Naive thymus-derived CD8-positive, alpha-beta T cell (primary cell): ENCODE measurements at regions of chr11 and their contacts with region 1.

Region 1: GRCh38 chr11:66317723-66318599 is 1.1 kb upstream of the CD248 start:
- DNase-seq: peak; percentile 75 to 98 (median 93)
- ATAC-seq: peak; percentile 72 to 85
- H3K4me3 Mint-ChIP-seq: peak overlapping the region; percentile 73 to 97 (median 90)
- H3K27ac Mint-ChIP-seq: peak overlapping the region; percentile 84 to 100 (median 100)
- H3K4me1 Mint-ChIP-seq: peaks cover 36 to 76% (median 60%) of the 10 kb centered on the region in 4 donors
- H3K27me3 Mint-ChIP-seq: no peaks in the 10 kb centered on the region

Region 2: DNA sequence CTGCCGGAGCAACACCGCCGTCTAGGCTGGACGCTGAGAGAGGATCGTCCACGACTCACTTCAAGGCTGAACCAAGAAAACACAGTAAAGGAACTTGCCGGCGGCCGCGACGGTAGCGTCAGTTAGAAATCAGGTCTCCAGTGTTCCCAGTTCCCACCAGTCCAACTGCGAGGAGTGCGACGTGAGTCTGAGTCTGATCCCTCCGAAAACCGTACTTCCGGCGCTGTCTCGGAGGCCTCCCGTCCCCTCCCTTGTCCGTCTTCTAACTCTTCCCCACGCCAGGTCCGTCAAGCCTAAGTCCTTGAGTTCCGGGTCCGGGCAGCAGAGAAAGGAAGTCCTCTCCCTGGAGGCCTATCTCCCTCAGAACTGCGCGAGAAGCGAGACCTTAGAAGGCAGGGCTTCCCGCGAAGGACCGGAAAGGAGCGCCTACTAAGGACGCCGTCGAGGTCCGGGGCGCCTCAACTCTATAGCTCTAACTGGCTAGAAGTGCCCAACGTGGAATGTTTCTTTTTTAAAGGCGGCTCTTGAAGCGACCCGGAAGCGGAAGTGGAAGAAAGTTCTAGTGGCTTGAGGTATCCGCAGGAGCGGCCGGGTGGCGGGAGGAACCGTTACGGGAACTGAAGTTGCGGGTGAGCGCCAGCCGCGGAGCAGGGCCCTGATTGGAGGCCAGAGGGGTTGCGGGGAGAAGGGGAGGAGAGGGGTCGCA is 315.9 kb before region 1 on chr11 and contains the starts of genes BANF1 and EIF1AD:
- POLR2A ChIA-PET with region 1: no interaction called
- DNase-seq: peak; percentile 69 to 99 (median 94)
- ATAC-seq: peak; percentile 79 to 88
- H3K4me3 Mint-ChIP-seq: peak within 1 kb of the TSS; percentile 98 to 100 (median 99)
- H3K27ac Mint-ChIP-seq: peak within 1 kb of the TSS; percentile 98 to 100 (median 99)
- H3K4me1 Mint-ChIP-seq: peaks cover 17 to 54% (median 48%) of the 10 kb centered on the region in 4 donors
- H3K27me3 Mint-ChIP-seq: no peaks in the 10 kb centered on the region
- polyA plus RNA-seq, gene BANF1: 225 to 250 (median 241) TPM
- polyA plus RNA-seq, gene EIF1AD: 11.5 to 18.7 (median 14.3) TPM

Region 3: GRCh38 chr11:66087148-66087908 is 230.6 kb before region 1 on chr11:
- POLR2A ChIA-PET with region 1: no interaction called
- DNase-seq: no peak
- ATAC-seq: no peak
- H3K4me3 Mint-ChIP-seq: peak overlapping the region in 9 of 10 donors; percentile 26 to 69 (median 47)
- H3K27ac Mint-ChIP-seq: peak overlapping the region; percentile 11 to 95 (median 76)
- H3K4me1 Mint-ChIP-seq: peaks cover 31 to 83% (median 77%) of the 10 kb centered on the region in 4 donors
- H3K27me3 Mint-ChIP-seq: no peaks in the 10 kb centered on the region

Region 4: DNA sequence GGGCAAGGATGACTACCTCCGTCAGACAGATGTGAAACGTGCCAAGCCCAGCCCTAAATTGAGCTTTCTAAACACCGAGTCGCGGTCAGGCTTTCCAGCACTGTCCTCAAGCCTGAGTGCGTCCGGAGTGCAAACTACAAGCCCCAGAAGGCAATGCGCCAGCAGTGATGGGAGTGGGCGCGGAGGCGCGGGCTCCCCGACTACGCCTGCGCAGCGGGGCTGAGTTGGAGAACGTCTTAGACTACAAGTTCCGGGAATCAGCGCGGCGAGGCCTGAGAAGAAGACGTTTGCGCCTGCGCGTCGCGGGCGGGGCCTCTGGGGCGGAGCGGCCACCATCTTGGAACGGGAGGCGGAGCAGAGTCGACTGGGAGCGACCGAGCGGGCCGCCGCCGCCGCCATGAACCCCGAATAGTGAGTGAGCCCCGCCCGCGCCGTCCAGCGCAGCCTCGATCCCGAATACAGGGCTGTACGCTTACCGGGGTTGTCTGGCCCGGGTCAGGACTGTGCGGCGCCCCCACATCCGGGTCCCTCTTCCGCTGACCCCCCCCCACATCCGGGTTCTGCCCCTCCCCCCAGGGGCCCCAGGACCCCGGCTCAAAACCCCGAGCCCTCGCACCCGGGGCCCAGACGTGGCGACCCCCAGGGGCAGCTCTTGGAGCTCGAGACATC is 49.5 kb before region 1 on chr11 and contains the start of gene RAB1B:
- POLR2A ChIA-PET with region 1: interaction called, 19 read pairs
- DNase-seq: peak; percentile 98 to 100 (median 100)
- ATAC-seq: peak; percentile 76 to 80
- H3K4me3 Mint-ChIP-seq: peak within 1 kb of the TSS; percentile 89 to 98 (median 94)
- H3K27ac Mint-ChIP-seq: peak within 1 kb of the TSS; percentile 95 to 100 (median 99)
- H3K4me1 Mint-ChIP-seq: peaks cover 23 to 50% (median 45%) of the 10 kb centered on the region in 4 donors
- H3K27me3 Mint-ChIP-seq: peaks cover 0 to 2% (median 0%) of the 10 kb centered on the region in 5 donors
- polyA plus RNA-seq, gene RAB1B: 13.1 to 16.1 (median 14.0) TPM

Region 5: DNA sequence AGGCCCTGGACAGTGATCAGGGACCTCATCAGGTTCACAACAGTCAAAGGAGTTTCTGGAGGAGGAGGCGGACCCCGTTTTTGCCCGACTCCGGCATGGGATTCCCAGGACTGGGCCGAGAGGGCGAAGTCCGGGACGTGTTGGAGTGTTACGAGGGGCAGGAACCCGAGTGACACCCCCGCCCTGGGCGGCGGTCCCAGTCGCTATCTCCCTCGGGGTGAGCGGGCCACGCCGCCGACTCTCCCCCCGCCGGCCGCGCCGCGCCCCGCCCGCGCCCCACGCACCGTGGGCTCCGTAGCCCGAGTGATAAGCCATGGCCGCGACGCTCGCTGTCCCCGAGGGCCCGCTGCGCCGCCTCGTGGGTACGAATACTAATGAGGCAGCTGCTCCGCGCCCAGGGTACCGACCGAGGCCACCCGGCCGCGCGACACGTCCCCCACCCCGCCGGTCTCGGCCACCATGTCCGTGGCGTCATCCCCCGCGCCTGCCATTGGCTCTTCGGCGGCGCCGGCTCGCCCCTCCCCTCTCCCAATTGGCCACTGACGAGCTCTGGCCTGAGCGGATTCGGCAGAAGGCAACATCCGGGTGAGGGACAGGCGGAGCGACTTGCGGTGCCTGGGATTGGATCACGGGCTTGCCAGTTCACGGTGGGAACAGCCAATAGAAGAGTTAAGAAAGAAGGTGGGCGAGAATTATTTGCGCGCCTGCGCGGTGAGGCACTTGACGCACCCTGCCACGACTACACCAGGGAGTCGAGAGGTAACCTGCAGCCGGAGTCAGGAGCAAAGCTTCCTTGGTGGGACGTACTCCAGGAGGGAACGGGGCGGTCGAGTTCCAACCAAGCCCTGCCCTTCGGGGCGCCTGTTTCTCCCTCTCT is 29.1 kb before region 1 on chr11 and contains the start of gene YIF1A:
- POLR2A ChIA-PET with region 1: interaction called, 16 read pairs
- DNase-seq: peak; percentile 94 to 99 (median 98)
- ATAC-seq: peak; percentile 90 to 94
- H3K4me3 Mint-ChIP-seq: peak within 1 kb of the TSS; percentile 84 to 96 (median 92)
- H3K27ac Mint-ChIP-seq: peak within 1 kb of the TSS; percentile 88 to 97 (median 94)
- H3K4me1 Mint-ChIP-seq: peaks cover 19 to 51% (median 45%) of the 10 kb centered on the region in 4 donors
- H3K27me3 Mint-ChIP-seq: peaks cover 2 to 20% (median 13%) of the 10 kb centered on the region in 5 donors
- polyA plus RNA-seq, gene YIF1A: 49.1 to 59.9 (median 53.9) TPM

Region 6: DNA sequence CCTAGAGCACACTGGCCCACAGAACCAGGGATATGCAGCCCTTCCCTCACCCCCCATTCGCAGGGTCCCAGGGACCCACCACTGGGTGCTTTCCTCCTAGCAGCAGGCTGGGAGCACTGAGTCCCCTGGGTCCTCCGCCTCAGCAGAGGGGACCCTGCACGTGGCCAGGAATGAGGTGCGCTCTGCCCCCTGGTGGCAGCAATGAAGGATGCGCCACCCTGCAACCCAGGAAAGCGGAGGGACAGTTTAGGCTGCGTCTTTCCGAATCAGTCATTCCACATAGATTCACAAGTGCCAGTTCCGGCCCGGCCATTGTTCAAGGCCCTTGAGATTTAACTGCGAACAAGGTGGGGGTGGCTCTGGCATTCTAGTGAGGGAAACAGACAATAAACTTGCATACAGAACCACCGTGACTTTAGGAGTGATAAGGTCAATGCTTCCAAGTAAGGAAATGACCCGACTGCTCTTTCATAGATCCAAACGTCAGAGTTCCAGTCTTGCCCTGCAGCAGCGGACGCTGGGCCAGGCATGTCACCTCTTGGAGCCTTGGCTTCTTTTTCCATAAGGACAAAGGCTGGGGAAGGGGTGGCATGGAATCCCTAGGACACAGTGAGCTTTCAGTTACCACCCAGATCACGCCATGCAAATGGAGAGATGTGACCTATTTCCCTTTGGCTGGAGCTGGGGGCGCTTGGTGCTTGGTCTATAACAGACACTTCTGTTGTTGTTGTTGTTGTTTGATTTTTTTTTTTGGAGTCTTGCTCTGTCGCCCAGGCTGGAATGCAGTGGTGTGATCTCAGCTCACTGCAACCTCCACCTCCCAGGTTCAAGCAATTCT is 10.6 kb after region 1 on chr11:
- POLR2A ChIA-PET with region 1: interaction called, 126 read pairs
- DNase-seq: peak; percentile 70 to 90 (median 80)
- ATAC-seq: peak; percentile 88 to 89
- H3K4me3 Mint-ChIP-seq: peak overlapping the region; percentile 20 to 88 (median 70)
- H3K27ac Mint-ChIP-seq: peak overlapping the region; percentile 85 to 95 (median 91)
- H3K4me1 Mint-ChIP-seq: peaks cover 25 to 48% (median 44%) of the 10 kb centered on the region in 4 donors
- H3K27me3 Mint-ChIP-seq: no peaks in the 10 kb centered on the region

Region 7: DNA sequence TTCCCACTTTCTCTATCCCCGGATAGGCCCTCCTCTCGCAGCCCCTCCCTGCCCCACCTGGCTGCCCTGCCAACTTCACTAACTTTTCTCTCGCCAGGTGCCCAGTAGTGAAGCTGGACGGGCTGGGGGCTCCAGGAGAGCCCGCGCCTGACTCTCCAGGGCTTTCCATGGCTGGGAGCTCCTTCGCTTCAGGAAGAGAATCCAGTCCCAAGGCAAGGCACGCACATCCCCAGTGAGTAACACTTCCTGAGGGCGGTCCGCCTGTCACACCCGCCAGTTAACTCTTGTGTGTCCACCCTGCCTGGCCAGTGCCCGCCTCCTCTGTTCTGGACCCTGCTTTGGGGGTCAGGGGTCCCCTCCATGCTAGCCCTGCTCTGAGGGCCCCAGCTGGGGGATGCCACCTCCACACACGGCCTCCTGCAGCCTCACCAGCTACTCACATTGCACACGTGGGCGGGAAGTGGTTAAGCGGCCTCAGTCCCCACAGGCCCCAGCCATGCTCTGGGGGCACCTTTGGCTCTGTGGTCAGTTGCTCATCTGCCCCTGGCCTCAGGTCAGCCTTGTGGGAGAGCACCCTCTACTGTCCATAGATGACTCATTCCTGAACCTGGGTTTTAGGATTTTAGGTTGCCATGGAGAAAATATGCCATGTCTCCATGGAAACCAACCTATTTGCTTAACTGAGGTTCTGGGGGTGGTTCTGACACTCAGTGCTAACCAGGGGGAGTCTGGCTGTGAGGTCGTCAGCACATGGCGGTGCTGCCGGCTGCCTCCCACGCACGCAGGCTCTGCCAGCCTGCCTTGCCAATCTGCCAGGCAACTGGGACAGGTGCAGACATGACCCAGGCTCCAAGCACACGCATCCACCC is 18.5 kb after region 1 on chr11 and contains the start of gene RIN1:
- POLR2A ChIA-PET with region 1: interaction called, 45 read pairs
- DNase-seq: peak in 9 of 10 donors; percentile 12 to 80 (median 62)
- ATAC-seq: peak; percentile 81 to 86
- H3K4me3 Mint-ChIP-seq: peak within 1 kb of the TSS; percentile 89 to 96 (median 92)
- H3K27ac Mint-ChIP-seq: peak within 1 kb of the TSS; percentile 35 to 96 (median 92)
- H3K4me1 Mint-ChIP-seq: peaks cover 15 to 30% (median 24%) of the 10 kb centered on the region in 4 donors
- H3K27me3 Mint-ChIP-seq: no peaks in the 10 kb centered on the region
- polyA plus RNA-seq, gene RIN1: 2.7 to 6.5 (median 3.7) TPM

Region 8: DNA sequence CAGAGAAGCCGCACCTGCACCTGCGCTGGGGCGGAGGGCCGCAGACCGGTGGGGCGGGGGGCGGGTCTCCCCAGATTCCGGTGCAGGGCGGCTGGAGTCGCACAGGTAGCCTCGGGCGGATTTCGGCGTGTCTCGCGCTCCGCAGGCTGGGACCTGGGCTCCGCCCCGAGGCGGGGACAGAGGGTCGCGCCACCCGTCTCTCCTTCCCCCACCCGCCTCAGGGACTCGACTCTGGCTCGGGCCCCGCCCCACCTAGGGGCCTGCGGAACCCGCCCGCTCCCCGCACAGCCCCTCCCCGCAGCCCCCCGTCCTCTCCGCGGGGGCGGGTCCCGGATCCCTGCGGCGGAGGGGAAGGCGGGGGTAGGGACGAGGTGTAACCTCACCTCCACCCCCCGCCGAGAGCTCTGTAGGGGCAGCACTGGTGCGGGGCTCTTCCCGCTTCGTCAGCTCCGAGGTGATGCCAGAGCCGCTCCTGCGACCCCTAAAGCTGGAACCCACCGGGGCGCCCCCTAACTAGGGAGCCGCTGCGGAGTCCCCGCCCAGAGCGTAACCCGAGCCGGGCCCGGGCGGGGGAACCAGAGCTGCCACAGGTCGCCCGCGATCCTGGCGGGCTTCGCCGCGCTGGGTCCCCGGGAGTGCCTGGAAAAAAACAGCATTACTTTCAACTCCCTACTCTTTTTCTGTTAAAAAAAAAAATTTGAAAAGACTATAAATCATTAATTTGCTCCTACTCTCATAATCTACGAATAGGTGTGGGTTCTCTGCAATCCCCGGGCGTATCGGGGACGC is 53.9 kb after region 1 on chr11 and contains the start of gene SLC29A2:
- POLR2A ChIA-PET with region 1: interaction called, 28 read pairs
- DNase-seq: peak; percentile 65 to 89 (median 82)
- ATAC-seq: peak; percentile 80 to 83
- H3K4me3 Mint-ChIP-seq: peak within 1 kb of the TSS; percentile 77 to 95 (median 91)
- H3K27ac Mint-ChIP-seq: peak within 1 kb of the TSS; percentile 80 to 98 (median 94)
- H3K4me1 Mint-ChIP-seq: peaks cover 6 to 17% (median 12%) of the 10 kb centered on the region in 4 donors
- H3K27me3 Mint-ChIP-seq: no peaks in the 10 kb centered on the region
- polyA plus RNA-seq, gene SLC29A2: 1.4 to 3.9 (median 2.3) TPM

Region 9: DNA sequence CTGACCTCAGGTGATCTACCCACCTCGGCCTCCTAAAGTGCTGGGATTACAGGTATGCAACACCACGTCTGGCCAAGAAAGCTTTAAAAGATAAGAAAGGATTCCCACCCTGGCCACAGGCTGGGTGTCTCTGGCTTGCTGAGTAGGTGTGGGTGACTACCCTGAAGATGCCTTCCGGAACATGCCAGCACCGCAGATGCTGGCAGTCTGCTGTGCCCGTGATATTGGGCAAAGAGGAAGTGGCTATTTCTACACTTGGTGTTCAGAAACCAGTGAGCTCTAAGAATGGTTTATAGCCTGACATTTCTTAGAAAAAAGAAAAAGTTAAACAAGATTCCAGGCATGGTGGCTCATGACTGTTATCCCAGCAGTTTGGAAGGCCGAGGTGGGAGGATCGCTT is 114.6 kb after region 1 on chr11:
- POLR2A ChIA-PET with region 1: no interaction called
- DNase-seq: no peak
- ATAC-seq: no peak
- H3K4me3 Mint-ChIP-seq: no peak overlapping the region
- H3K27ac Mint-ChIP-seq: no peak overlapping the region
- H3K4me1 Mint-ChIP-seq: peaks cover 0 to 5% (median 1%) of the 10 kb centered on the region in 4 donors
- H3K27me3 Mint-ChIP-seq: peaks cover 0 to 1% (median 0%) of the 10 kb centered on the region in 5 donors

Region 10: DNA sequence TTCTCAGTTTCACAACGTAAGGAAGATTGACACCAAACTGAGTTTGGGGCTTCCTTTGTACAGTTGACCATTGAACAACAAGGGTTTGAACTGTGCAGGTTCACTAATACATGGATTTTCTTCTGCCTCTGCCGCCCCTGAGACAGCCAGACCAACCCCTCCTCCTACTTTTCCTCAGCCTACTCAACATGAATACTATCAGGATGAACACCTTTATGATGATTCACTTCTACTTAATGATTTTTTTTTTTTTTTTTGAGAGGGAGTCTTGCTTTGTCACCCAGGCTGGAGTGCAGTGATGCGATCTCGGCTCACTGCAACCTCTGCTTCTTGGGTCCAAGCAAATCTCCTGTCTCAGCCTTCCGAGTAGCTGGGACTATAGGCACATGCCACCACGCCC is 335.2 kb after region 1 on chr11:
- POLR2A ChIA-PET with region 1: no interaction called
- DNase-seq: no peak
- ATAC-seq: no peak
- H3K4me3 Mint-ChIP-seq: no peak overlapping the region
- H3K27ac Mint-ChIP-seq: peak overlapping the region; percentile 6 to 76 (median 58)
- H3K4me1 Mint-ChIP-seq: peaks cover 9 to 55% (median 45%) of the 10 kb centered on the region in 4 donors
- H3K27me3 Mint-ChIP-seq: no peaks in the 10 kb centered on the region